Aorta (tissue), 5 donors: ENCODE measurements at regions of chr2 and their contacts with region 1.

Region 1: DNA sequence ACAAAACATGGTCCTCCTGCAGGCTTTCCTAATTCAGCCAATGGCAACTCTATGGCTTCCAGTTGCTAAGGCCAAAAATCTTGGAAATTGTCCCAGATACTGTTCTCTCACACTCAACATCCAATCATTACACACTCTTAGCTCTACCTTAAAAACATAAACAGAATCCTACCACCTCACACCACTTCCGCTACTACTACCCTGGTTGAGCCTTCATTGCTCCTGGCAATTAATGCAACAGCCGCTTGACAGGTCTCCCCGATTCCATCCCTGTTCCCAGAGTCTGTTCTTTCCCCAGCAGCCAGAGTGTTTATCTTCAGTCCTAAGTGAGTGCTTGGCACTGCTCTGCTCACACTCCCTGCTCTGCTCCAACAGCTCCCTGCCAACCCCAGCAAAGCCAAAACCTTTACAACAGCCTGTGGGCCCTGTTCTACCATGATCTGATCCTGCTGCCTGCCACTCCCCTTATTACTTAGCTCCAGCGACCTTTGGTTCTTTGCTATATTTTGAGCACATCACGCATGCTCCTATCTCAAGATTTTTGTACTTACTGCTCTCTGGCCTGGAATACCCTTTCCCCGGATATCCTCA is 67.5 kb upstream of the AMMECR1L start:
- DNase-seq: peak in 1 of 2 donors; percentile 52
- ATAC-seq: peak; percentile 85
- H3K4me3 ChIP-seq: peak overlapping the region in 1 of 2 donors; percentile 8
- H3K27ac ChIP-seq: peak overlapping the region; percentile 79 to 80
- H3K4me1 ChIP-seq: peaks cover 0 to 7% of the 10 kb centered on the region in 2 donors
- H3K27me3 ChIP-seq: no peaks in the 10 kb centered on the region

Region 2: GRCh38 chr2:127591221-127591923 is 361.9 kb before region 1 on chr2:
- intact Hi-C with region 1: loop called in 1 of 2 experiments (anchors 10 kb)
- DNase-seq: peak in 1 of 2 donors; percentile 80
- ATAC-seq: peak; percentile 78
- H3K4me3 ChIP-seq: no peak overlapping the region
- H3K27ac ChIP-seq: no peak overlapping the region
- H3K4me1 ChIP-seq: no peaks in the 10 kb centered on the region
- H3K27me3 ChIP-seq: no peaks in the 10 kb centered on the region